Heart right ventricle (tissue), 16 donors: ENCODE measurements at regions of chr11 and their contacts with region 1.

Region 1: DNA sequence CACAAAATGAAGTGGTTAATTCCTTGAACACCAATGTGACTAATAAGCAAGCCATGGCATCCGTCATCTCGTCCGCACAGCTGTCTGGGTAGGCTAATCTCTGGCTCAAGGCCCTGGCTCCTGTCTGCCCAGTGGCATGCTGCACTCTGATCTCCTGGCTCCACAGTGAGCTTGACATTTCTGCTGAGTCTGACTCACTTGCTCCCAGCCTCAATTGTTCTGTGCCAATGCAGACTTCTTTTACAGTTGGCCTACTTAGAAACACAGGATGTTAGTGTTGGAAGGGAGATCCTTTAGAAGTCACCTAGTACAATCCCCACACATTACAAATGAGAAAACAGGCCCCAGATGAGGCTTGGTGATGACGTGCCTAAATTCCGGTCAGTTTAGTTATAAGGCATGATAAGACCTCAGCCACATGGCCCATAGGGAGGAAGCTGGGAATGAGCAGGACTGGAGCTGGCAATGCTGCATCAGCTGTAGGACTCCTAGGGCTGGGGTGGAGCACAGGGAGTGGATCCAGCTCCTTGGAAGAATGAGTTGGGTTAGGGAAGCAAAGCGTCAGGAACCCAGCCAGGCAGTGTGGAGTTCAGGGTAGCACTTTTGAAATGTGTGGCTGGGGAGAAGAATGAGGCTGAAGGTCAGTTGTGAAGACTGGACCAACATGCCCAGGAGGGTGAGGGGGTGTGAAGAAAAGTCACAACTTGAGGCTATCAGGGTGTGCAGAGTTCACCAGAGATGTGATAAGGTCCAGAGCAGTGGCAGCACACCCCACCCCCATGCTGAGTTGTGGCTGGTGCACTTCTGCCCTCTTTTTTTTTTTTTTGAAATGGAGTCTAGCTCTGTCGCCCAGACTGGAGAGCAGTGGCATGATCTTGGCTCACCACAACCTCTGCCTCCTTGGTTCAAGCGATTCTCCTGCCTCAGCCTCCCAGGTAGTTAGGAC is 70.2 kb upstream of the EED start:
- DNase-seq: peak; percentile 69 to 91
- ATAC-seq: peak; percentile 88 to 99 (median 94)
- H3K4me3 ChIP-seq: no peak overlapping the region
- H3K27ac ChIP-seq: peak overlapping the region; percentile 37 to 92 (median 80)
- H3K4me1 ChIP-seq: peaks cover 8 to 75% (median 54%) of the 10 kb centered on the region in 9 donors
- H3K27me3 ChIP-seq: no peaks in the 10 kb centered on the region
- CTCF ChIP-seq: peak in 1 of 9 donors; percentile 8

Region 2: GRCh38 chr11:86068951-86069407 is 105.4 kb before region 1 on chr11 and contains the start of gene PICALM:
- intact Hi-C with region 1: loop called in 5 of 10 experiments (anchors 1 to 10 kb)
- DNase-seq: peak; percentile 98 to 99
- ATAC-seq: peak; percentile 92 to 98 (median 96)
- H3K4me3 ChIP-seq: peak within 1 kb of the TSS; percentile 77 to 99 (median 92)
- H3K27ac ChIP-seq: peak within 1 kb of the TSS; percentile 96 to 99 (median 98)
- H3K4me1 ChIP-seq: peaks cover 2 to 44% (median 34%) of the 10 kb centered on the region in 9 donors
- H3K27me3 ChIP-seq: no peaks in the 10 kb centered on the region
- CTCF ChIP-seq: peak in 1 of 9 donors; percentile 18
- total RNA-seq, gene PICALM: 124 to 206 (median 170) TPM

Region 3: GRCh38 chr11:86360775-86361395 is 186.5 kb after region 1 on chr11:
- intact Hi-C with region 1: no loop called
- DNase-seq: no peak
- ATAC-seq: no peak
- H3K4me3 ChIP-seq: no peak overlapping the region
- H3K27ac ChIP-seq: no peak overlapping the region
- H3K4me1 ChIP-seq: no peaks in the 10 kb centered on the region
- H3K27me3 ChIP-seq: no peaks in the 10 kb centered on the region
- CTCF ChIP-seq: peak in 5 of 9 donors; percentile 14 to 31 (median 23)

Region 4: GRCh38 chr11:86386746-86387145 is 212.4 kb after region 1 on chr11:
- intact Hi-C with region 1: no loop called
- DNase-seq: no peak
- ATAC-seq: no peak
- H3K4me3 ChIP-seq: no peak overlapping the region
- H3K27ac ChIP-seq: no peak overlapping the region
- H3K4me1 ChIP-seq: no peaks in the 10 kb centered on the region
- H3K27me3 ChIP-seq: no peaks in the 10 kb centered on the region
- CTCF ChIP-seq: no peak